Heart left ventricle (tissue), 16 donors: ENCODE measurements at regions of chr12 and their contacts with region 1.

Region 1: DNA sequence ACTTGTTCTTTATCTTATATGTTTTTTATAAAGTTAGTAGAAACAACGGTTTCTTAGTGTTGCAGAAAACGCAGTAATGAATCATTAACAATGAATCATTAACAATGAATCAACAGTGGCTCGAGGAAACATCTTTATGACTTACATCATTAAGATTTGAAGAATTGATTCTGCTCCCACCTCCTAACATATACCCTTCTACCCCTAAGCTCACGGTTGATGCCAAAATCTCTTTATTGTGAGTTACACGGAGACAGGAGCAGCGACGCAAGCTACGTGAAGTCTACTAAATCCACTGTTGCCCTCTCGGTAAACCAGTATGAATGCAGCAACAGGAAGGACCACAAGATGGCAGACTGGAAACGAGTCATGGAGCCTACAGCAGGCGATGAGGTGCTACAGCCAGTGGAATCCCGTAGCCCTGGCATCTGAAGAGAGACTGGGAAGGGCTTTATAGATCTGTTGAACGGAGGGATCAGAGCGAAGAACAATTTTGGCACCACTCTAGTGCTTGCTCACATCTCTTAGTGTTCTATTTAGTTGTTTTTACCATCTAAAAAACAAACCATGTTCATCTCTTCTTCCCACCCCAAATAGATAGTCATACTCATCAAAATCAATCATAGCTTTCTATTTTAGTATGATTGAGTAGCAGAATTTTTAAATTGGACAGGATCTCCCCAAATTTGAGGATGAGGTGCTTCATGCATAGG is 332.7 kb downstream of the DUSP6 start:
- DNase-seq: peak; percentile 52 to 77 (median 71)
- ATAC-seq: peak; percentile 91 to 98 (median 96)
- H3K4me3 ChIP-seq: peak overlapping the region in 9 of 12 donors; percentile 22 to 48 (median 35)
- H3K27ac ChIP-seq: no peak overlapping the region
- H3K4me1 ChIP-seq: peaks cover 0 to 10% (median 5%) of the 10 kb centered on the region in 12 donors
- H3K27me3 ChIP-seq: peaks cover 0 to 3% (median 0%) of the 10 kb centered on the region in 9 donors
- CTCF ChIP-seq: peak; percentile 72 to 89 (median 84)
- POLR2A ChIP-seq: no peak

Region 2: DNA sequence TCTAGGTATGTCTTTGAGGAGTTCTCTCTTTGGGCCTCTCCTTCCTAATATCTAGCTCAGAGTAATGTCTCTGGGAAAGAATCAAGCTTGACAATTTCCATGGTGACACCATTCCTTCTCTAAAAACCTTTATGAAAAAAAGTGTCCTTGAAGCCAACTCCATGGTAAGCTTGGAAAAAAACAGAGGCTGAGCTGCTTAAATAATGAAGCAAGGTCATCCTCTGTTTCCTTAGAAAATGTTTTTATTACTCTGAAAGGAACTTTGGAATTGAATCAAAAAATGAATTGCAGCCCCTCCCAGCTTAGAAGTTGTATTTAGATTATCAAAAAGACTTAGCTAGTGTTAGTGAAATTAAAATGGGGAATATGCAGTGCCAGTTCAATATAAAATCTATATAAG is 273.2 kb before region 1 on chr12:
- intact Hi-C with region 1: no loop called
- DNase-seq: no peak
- ATAC-seq: peak in 2 of 4 donors; percentile 26 to 53
- H3K4me3 ChIP-seq: no peak overlapping the region
- H3K27ac ChIP-seq: peak overlapping the region in 2 of 12 donors; percentile 4 to 21
- H3K4me1 ChIP-seq: peaks cover 0 to 27% (median 0%) of the 10 kb centered on the region in 12 donors
- H3K27me3 ChIP-seq: no peaks in the 10 kb centered on the region
- CTCF ChIP-seq: no peak
- POLR2A ChIP-seq: no peak

Region 3: GRCh38 chr12:88946372-88946997 is 73.1 kb before region 1 on chr12:
- intact Hi-C with region 1: no loop called
- DNase-seq: peak in 4 of 5 donors; percentile 23 to 44 (median 34)
- ATAC-seq: peak; percentile 20 to 84 (median 54)
- H3K4me3 ChIP-seq: no peak overlapping the region
- H3K27ac ChIP-seq: peak overlapping the region in 10 of 12 donors; percentile 12 to 70 (median 48)
- H3K4me1 ChIP-seq: peaks cover 0 to 31% (median 6%) of the 10 kb centered on the region in 12 donors
- H3K27me3 ChIP-seq: no peaks in the 10 kb centered on the region
- CTCF ChIP-seq: peak in 3 of 12 donors; percentile 11 to 27 (median 19)
- POLR2A ChIP-seq: no peak

Region 4: GRCh38 chr12:89461649-89462612 is 442.4 kb after region 1 on chr12:
- intact Hi-C with region 1: loop called in 9 of 10 experiments (anchors 1 to 2 kb)
- DNase-seq: no peak
- ATAC-seq: peak; percentile 83 to 93 (median 87)
- H3K4me3 ChIP-seq: peak overlapping the region in 6 of 12 donors; percentile 8 to 35 (median 20)
- H3K27ac ChIP-seq: peak overlapping the region in 8 of 12 donors; percentile 16 to 72 (median 34)
- H3K4me1 ChIP-seq: peaks cover 0 to 16% (median 5%) of the 10 kb centered on the region in 12 donors
- H3K27me3 ChIP-seq: no peaks in the 10 kb centered on the region
- CTCF ChIP-seq: peak; percentile 42 to 76 (median 66)
- POLR2A ChIP-seq: no peak

Region 5: GRCh38 chr12:89529738-89530137 is 510.2 kb after region 1 on chr12:
- intact Hi-C with region 1: loop called (anchors 2 to 5 kb)
- DNase-seq: no peak
- ATAC-seq: no peak
- H3K4me3 ChIP-seq: no peak overlapping the region
- H3K27ac ChIP-seq: no peak overlapping the region
- H3K4me1 ChIP-seq: peaks cover 0 to 16% (median 10%) of the 10 kb centered on the region in 12 donors
- H3K27me3 ChIP-seq: no peaks in the 10 kb centered on the region
- CTCF ChIP-seq: peak; percentile 55 to 79 (median 72)
- POLR2A ChIP-seq: no peak

Region 6: DNA sequence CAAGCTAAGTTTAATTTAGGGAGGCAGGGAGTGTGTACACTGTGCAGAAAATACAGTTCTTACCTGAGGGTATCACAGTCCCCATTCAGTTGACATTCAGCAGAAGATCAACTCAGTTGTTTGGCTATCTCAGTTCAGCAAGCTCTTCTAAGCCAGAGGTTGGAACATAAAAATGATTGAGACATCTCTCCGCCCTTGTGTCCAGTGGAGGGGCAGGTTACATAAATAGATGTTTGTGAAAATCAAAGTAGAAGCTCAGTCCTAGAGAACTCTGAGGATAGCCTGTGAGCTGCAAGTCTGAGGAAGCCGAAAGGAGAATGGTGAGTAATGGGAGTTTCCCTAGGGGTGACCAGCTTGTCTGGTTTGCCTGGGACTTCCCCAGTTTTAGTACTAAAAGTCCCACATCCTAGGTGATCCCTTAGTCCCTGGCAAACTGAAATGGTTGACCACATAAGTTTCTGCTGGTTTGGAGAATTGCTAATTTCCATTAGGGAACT is 940.5 kb after region 1 on chr12:
- intact Hi-C with region 1: loop called in 1 of 10 experiments (anchors 10 kb)
- DNase-seq: no peak
- ATAC-seq: no peak
- H3K4me3 ChIP-seq: no peak overlapping the region
- H3K27ac ChIP-seq: no peak overlapping the region
- H3K4me1 ChIP-seq: peaks cover 0 to 8% (median 0%) of the 10 kb centered on the region in 12 donors
- H3K27me3 ChIP-seq: no peaks in the 10 kb centered on the region
- CTCF ChIP-seq: no peak
- POLR2A ChIP-seq: no peak